Breast epithelium (tissue), 4 donors: ENCODE measurements at regions of chr2 and their contacts with region 1.

Region 1: DNA sequence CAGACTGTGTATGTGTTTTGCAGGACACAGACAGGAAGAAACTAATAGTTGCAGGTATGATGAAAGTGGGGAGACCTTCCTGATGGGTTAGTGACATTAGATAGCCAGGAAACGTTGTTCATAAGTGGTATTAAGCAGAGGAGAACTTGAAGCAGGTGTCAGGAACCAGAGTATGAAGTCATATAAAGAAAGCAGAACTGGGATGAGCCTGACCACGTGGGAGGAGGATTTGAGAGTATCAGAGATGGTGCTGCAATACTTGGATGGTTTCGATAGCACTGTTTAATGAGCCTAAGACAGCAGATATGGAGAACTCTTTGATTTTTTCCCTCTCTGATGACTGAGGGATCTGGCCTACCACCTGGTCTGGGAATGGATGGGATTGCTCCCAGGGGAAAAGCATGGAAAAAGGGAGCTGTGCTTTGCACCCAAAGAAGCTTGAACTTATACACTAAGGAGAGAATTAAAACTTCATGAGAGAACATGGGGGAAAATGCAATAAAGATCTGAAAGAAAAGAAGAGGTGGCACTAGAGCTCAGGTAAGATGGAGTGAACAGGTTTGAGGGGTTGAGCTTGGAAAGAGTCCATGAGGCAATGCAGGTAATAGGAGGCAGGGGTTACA is 226.0 kb upstream of the LRRTM1 start:
- DNase-seq: no peak
- H3K4me3 ChIP-seq: no peak overlapping the region
- H3K27ac ChIP-seq: no peak overlapping the region
- H3K4me1 ChIP-seq: no peaks in the 10 kb centered on the region
- H3K27me3 ChIP-seq: no peaks in the 10 kb centered on the region
- CTCF ChIP-seq: no peak
- POLR2A ChIP-seq: no peak

Region 2: GRCh38 chr2:80102026-80102425 is 428.5 kb before region 1 on chr2:
- intact Hi-C with region 1: loop called (anchors 5 kb)
- DNase-seq: no peak
- H3K4me3 ChIP-seq: no peak overlapping the region
- H3K27ac ChIP-seq: no peak overlapping the region
- H3K4me1 ChIP-seq: no peaks in the 10 kb centered on the region
- H3K27me3 ChIP-seq: no peaks in the 10 kb centered on the region
- CTCF ChIP-seq: no peak
- POLR2A ChIP-seq: no peak